CD8-positive, alpha-beta T cell (primary cell): ENCODE measurements at regions of chr1 and their contacts with region 1.

Region 1: GRCh38 chr1:92749024-92749634 is 35.8 kb downstream of the EVI5 start:
- DNase-seq: peak in 7 of 9 experiments; percentile 7 to 64 (median 26)
- ATAC-seq: peak; percentile 36
- H3K4me3 ChIP-seq: no peak overlapping the region
- H3K4me3 Mint-ChIP-seq: no peak overlapping the region
- H3K27ac ChIP-seq: no peak overlapping the region
- H3K27ac Mint-ChIP-seq: no peak overlapping the region
- H3K4me1 ChIP-seq: no peaks in the 10 kb centered on the region
- H3K4me1 Mint-ChIP-seq: no peaks in the 10 kb centered on the region
- H3K27me3 ChIP-seq: no peaks in the 10 kb centered on the region
- H3K27me3 Mint-ChIP-seq: no peaks in the 10 kb centered on the region
- CTCF ChIP-seq: peak; percentile 45

Region 2: GRCh38 chr1:92817986-92818764 is 69.0 kb after region 1 on chr1:
- CTCF ChIA-PET with region 1: interaction called, 33 read pairs
- POLR2A ChIA-PET with region 1: no interaction called
- intact Hi-C with region 1: loop called (anchors 1 kb)
- DNase-seq: peak in 3 of 9 experiments; percentile 14 to 54 (median 48)
- ATAC-seq: peak; percentile 69
- H3K4me3 ChIP-seq: no peak overlapping the region
- H3K4me3 Mint-ChIP-seq: no peak overlapping the region
- H3K27ac ChIP-seq: no peak overlapping the region
- H3K27ac Mint-ChIP-seq: no peak overlapping the region
- H3K4me1 ChIP-seq: no peaks in the 10 kb centered on the region
- H3K4me1 Mint-ChIP-seq: no peaks in the 10 kb centered on the region
- H3K27me3 ChIP-seq: peaks cover 0 to 2% of the 10 kb centered on the region in 2 experiments
- H3K27me3 Mint-ChIP-seq: peaks cover 11% of the 10 kb centered on the region
- CTCF ChIP-seq: peak; percentile 66